ENCODE measurements at regions of chr4 and their contacts with region 1.

Region 1: GRCh38 chr4:57043347-57044251 is 64.9 kb downstream of the POLR2B start:
- DNase-seq: peak; percentile 50
- H3K4me3 ChIP-seq: no peak overlapping the region
- H3K27ac ChIP-seq: peak overlapping the region; percentile 48 to 86
- H3K4me1 ChIP-seq: peaks cover 45% of the 10 kb centered on the region
- H3K27me3 ChIP-seq: no peaks in the 10 kb centered on the region
- CTCF ChIP-seq: no peak
- POLR2A ChIP-seq: no peak

Region 2: DNA sequence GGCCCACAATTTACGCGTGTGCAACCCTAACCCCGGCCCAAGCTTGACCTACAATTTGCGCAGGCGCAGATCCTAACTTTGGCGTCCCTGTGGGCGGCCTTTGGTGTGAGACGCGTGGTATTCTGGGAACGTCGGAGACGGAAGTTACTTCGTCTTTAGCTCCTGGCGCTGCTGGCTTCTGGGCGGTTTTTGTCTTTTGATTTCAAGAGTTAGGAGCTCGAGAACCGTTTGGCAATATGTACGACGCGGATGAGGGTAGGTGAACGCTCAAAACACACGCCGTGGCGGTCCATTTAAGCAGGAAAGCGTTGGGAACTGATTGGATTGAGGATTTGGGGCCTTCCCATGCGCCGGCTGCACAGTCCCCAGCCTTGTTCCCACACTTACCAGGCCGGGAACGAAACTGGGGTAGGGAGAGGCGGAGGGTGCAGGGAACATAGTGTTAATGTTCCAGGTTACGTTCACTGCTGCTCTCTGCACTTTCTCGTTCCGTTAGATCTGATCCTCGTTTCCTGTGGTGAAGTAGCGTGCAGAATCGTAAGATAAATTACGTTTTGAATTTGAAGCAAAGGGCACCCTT is 64.8 kb before region 1 on chr4 and contains the start of gene POLR2B:
- intact Hi-C with region 1: no loop called
- DNase-seq: peak; percentile 97
- H3K4me3 ChIP-seq: peak within 1 kb of the TSS; percentile 92 to 97
- H3K27ac ChIP-seq: peak within 1 kb of the TSS; percentile 73 to 93
- H3K4me1 ChIP-seq: peaks cover 16% of the 10 kb centered on the region
- H3K27me3 ChIP-seq: no peaks in the 10 kb centered on the region
- CTCF ChIP-seq: no peak
- POLR2A ChIP-seq: peak; percentile 34
- total RNA-seq, gene POLR2B: 81.8 to 104 TPM

Region 3: GRCh38 chr4:57094832-57095223 is 51.2 kb after region 1 on chr4:
- intact Hi-C with region 1: loop called (anchors 10 kb)
- DNase-seq: no peak
- H3K4me3 ChIP-seq: no peak overlapping the region
- H3K27ac ChIP-seq: peak overlapping the region in 1 of 2 donors; percentile 96
- H3K4me1 ChIP-seq: peaks cover 21% of the 10 kb centered on the region
- H3K27me3 ChIP-seq: no peaks in the 10 kb centered on the region
- CTCF ChIP-seq: no peak
- POLR2A ChIP-seq: no peak